ENCODE measurements at regions of chr20 and their contacts with region 1.

Region 1: GRCh38 chr20:35699127-35699975 is at the starts of genes NFS1 and ROMO1:
- DNase-seq: peak; percentile 90 to 97 (median 94)
- ATAC-seq: peak; percentile 94
- H3K4me3 ChIP-seq: peak within 1 kb of the TSS; percentile 96
- H3K27ac ChIP-seq: peak within 1 kb of the TSS; percentile 92
- H3K4me1 ChIP-seq: peaks cover 10 to 14% of the 10 kb centered on the region in 2 experiments; a peak in 4 of 5 replicates
- H3K27me3 ChIP-seq: no peaks in the 10 kb centered on the region
- CTCF ChIP-seq: peak; percentile 29 to 34 (median 32); a peak in 5 of 6 replicates
- EP300 ChIP-seq: no peak
- POLR2A ChIP-seq: peak; percentile 91
- RAD21 ChIP-seq: no peak
- polyA plus RNA-seq, gene NFS1: 11.5 to 13.9 TPM
- polyA plus RNA-seq, gene ROMO1: 635 to 741 TPM

Region 2: DNA sequence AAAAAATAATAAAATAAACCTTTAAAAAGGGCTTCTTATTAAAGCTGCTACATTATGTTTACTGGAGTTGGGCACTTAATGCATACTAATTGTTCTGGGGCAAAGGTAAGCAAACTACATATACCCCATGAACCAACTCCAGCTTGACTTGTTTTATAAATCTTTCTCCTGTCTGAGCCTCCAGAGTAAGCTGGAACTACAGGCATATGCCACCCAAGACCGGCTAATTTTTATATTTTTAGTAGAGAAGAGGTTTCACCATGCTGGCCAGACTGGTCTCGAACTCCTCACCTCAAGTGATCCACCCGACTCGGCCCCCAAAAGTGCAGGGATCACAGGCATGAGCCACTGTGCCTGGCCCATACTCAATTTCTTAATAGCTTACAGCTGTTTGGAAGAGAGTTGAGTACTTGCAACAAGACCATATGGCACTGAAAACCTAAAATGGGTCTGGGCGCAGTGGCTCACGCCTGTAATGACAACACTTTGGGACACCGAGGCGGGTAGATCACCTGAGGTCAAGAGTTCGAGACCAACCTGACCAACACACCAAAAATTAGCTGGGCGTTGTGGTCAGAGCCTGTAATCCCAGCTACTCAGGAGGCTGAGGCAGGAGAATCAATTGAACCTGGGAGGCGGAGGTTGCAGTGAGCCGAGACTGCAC is 19.8 kb after region 1 on chr20:
- CTCF ChIA-PET with region 1: no interaction called
- POLR2A ChIA-PET with region 1: interaction called, 102 read pairs
- in situ Hi-C with region 1: no loop called
- intact Hi-C with region 1: no loop called
- DNase-seq: no peak
- ATAC-seq: no peak
- H3K4me3 ChIP-seq: no peak overlapping the region
- H3K27ac ChIP-seq: no peak overlapping the region
- H3K4me1 ChIP-seq: no peaks in the 10 kb centered on the region
- H3K27me3 ChIP-seq: no peaks in the 10 kb centered on the region
- CTCF ChIP-seq: no peak
- EP300 ChIP-seq: no peak
- POLR2A ChIP-seq: no peak; the same call in 1 of the 2 replicates
- RAD21 ChIP-seq: no peak